ENCODE measurements at regions of chr11 and their contacts with region 1.

Region 1: GRCh38 chr11:118002541-118003423 is 16.6 kb downstream of the IL10RA start:
- DNase-seq: peak; percentile 85
- ATAC-seq: peak; percentile 67
- H3K4me3 Mint-ChIP-seq: peak overlapping the region; percentile 38
- H3K27ac Mint-ChIP-seq: peak overlapping the region; percentile 97
- H3K4me1 Mint-ChIP-seq: peaks cover 94% of the 10 kb centered on the region
- H3K27me3 Mint-ChIP-seq: no peaks in the 10 kb centered on the region

Region 2: DNA sequence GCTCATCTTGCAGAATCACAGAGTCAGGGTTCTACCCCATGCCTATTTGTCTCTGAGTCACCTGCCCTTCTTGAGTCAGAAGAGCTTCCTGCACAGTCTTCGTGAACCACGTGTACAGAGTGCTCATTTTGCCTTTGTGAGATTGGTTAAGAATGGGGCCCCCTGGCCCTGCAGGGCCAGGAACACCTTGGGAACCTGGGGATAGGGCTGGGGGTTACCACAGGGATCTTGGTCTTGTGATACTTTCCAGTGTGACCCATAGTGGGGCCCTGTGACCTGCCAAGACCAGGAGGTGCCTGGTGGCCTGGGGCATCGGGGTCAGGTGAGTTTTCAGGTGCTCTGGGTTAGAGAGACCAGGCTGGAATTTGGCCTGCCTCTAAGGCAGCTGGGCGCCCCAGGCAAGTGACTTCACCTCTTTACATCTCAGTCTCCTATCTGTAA is 83.0 kb before region 1 on chr11:
- CTCF ChIA-PET with region 1: no interaction called
- POLR2A ChIA-PET with region 1: no interaction called
- intact Hi-C with region 1: no loop called
- DNase-seq: peak; percentile 49
- ATAC-seq: peak; percentile 100
- H3K4me3 Mint-ChIP-seq: no peak overlapping the region
- H3K27ac Mint-ChIP-seq: peak overlapping the region; percentile 33
- H3K4me1 Mint-ChIP-seq: peaks cover 11% of the 10 kb centered on the region
- H3K27me3 Mint-ChIP-seq: no peaks in the 10 kb centered on the region

Region 3: GRCh38 chr11:117970400-117971024 is 32.3 kb before region 1 on chr11:
- CTCF ChIA-PET with region 1: interaction called, 3 read pairs
- POLR2A ChIA-PET with region 1: interaction called, 5 read pairs
- intact Hi-C with region 1: loop called in 1 of 2 experiments (anchors 1 kb)
- DNase-seq: peak; percentile 56
- ATAC-seq: peak; percentile 69
- H3K4me3 Mint-ChIP-seq: peak overlapping the region; percentile 4
- H3K27ac Mint-ChIP-seq: peak overlapping the region; percentile 74
- H3K4me1 Mint-ChIP-seq: peaks cover 65% of the 10 kb centered on the region
- H3K27me3 Mint-ChIP-seq: no peaks in the 10 kb centered on the region

Region 4: GRCh38 chr11:118046051-118046963 is 43.5 kb after region 1 on chr11:
- CTCF ChIA-PET with region 1: interaction called, 69 read pairs
- POLR2A ChIA-PET with region 1: interaction called, 32 read pairs
- intact Hi-C with region 1: loop called (anchors 1 kb)
- DNase-seq: peak; percentile 49
- ATAC-seq: peak; percentile 76
- H3K4me3 Mint-ChIP-seq: peak overlapping the region; percentile 25
- H3K27ac Mint-ChIP-seq: peak overlapping the region; percentile 76
- H3K4me1 Mint-ChIP-seq: peaks cover 88% of the 10 kb centered on the region
- H3K27me3 Mint-ChIP-seq: no peaks in the 10 kb centered on the region

Region 5: GRCh38 chr11:118060869-118061268 is 58.1 kb after region 1 on chr11:
- CTCF ChIA-PET with region 1: no interaction called
- POLR2A ChIA-PET with region 1: no interaction called
- intact Hi-C with region 1: no loop called
- DNase-seq: no peak
- ATAC-seq: peak; percentile 30
- H3K4me3 Mint-ChIP-seq: no peak overlapping the region
- H3K27ac Mint-ChIP-seq: no peak overlapping the region
- H3K4me1 Mint-ChIP-seq: no peaks in the 10 kb centered on the region
- H3K27me3 Mint-ChIP-seq: peaks cover 5% of the 10 kb centered on the region

Region 6: DNA sequence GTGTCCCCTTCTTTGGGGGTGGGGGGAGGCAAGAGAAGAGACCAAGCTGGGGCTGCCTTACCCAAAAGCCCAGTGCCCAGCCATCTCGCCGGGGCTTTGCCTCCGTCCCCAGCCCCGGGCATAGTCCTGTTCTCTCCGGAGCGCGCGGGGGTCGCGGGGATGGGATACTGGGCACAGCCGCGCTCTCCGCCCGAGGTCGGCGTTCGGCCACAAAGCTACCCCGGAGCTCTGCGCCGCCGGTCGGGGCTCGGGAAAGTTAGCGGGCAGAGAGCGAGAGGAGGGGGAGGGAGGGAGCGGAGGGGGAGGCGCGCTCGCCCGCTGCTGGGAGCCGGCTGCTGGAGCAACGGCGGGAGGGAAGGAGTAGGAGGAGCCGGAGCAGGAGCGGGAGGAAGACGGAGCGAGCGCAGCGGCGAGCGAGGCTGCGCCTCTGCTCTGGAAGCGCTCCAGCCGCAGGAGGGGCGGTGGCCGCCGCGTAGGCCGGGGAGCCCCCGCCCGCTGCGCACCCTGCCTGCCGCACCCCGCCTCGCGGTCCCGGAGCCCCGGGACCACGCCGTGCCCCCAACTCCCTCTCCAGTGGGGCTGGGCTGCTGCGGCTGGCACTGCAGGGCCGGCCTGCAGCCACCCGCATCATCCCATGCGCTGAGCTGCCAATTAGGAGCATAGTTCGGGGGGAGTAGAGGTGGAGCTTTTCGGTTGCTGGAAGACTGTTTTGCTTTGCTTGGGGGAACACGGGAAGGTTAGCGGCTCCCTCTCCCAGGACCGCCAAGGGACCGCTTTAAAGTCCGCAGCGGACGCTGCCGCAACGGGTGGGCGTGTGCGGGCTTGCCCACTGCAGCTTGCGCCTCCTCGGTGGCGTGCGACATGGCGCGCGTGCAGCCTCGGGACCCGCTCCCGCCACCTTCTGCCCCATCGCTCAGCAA is 150.0 kb after region 1 on chr11 and contains the start of gene SCN4B:
- CTCF ChIA-PET with region 1: no interaction called
- POLR2A ChIA-PET with region 1: no interaction called
- intact Hi-C with region 1: no loop called
- DNase-seq: peak; percentile 40
- ATAC-seq: peak; percentile 43
- H3K4me3 Mint-ChIP-seq: peak within 1 kb of the TSS; percentile 38
- H3K27ac Mint-ChIP-seq: no peak within 1 kb of the TSS
- H3K4me1 Mint-ChIP-seq: peaks cover 6% of the 10 kb centered on the region
- H3K27me3 Mint-ChIP-seq: peaks cover 54% of the 10 kb centered on the region
- total RNA-seq, gene SCN4B: 0.26 to 0.27 TPM

Region 7: DNA sequence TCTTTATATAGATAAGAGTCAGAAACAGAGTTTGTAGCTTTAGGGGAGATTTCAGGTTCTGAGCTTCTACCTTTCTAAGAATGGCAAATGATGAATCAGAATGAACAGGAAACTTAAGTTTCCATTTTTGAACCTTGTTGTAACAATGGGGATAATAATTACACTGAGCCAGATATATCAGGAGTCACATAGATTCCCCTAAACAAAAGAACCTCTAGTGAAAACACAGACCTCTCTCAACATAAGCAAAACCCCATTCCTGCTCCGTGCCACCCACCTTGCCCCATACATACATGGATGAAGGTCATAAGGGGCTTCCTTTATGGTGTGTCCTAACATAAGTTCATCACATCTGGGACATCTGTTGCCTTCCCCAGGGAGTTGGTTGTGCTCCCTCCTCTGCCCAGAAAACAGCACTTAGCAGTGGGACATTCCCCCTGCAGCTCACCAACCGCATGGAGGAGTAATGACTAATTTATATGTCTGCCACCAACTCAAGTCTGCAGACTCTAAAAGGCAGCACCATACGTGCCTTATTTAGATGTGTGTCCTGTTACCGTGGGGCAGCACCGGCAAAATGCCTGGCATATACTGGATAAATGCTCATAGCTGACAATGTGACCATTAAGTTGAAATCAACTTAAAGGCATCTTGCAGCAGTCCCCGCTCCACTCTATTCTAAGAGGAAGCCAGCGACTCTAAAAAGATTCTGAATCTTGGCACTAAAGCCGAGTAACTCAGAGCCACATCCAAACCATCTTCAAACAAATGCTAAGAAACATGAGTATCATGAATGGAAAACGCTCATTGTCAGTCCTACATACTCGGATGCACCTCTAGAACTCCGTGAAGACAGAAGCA is 214.1 kb after region 1 on chr11:
- CTCF ChIA-PET with region 1: no interaction called
- POLR2A ChIA-PET with region 1: no interaction called
- intact Hi-C with region 1: loop called in 1 of 2 experiments (anchors 2 kb)
- DNase-seq: peak; percentile 76
- ATAC-seq: peak; percentile 73
- H3K4me3 Mint-ChIP-seq: peak overlapping the region; percentile 76
- H3K27ac Mint-ChIP-seq: peak overlapping the region; percentile 100
- H3K4me1 Mint-ChIP-seq: peaks cover 97% of the 10 kb centered on the region
- H3K27me3 Mint-ChIP-seq: no peaks in the 10 kb centered on the region